Activated naive CD4-positive, alpha-beta T cell treated with anti-CD3 and anti-CD28 coated beads for 36 hours (primary cell): ENCODE measurements at regions of chr3 and their contacts with region 1.

Region 1: GRCh38 chr3:188584162-188584529 is 430.2 kb downstream of the LPP start:
- DNase-seq: peak; percentile 61
- H3K4me3 Mint-ChIP-seq: no peak overlapping the region
- H3K27ac Mint-ChIP-seq: no peak overlapping the region
- H3K4me1 Mint-ChIP-seq: peaks cover 15% of the 10 kb centered on the region
- H3K27me3 Mint-ChIP-seq: no peaks in the 10 kb centered on the region

Region 2: GRCh38 chr3:187770224-187770623 is 813.9 kb before region 1 on chr3:
- CTCF ChIA-PET with region 1: no interaction called
- intact Hi-C with region 1: loop called (anchors 1 kb)
- DNase-seq: peak; percentile 73
- H3K4me3 Mint-ChIP-seq: no peak overlapping the region
- H3K27ac Mint-ChIP-seq: peak overlapping the region; percentile 82
- H3K4me1 Mint-ChIP-seq: peaks cover 38% of the 10 kb centered on the region
- H3K27me3 Mint-ChIP-seq: no peaks in the 10 kb centered on the region

Region 3: DNA sequence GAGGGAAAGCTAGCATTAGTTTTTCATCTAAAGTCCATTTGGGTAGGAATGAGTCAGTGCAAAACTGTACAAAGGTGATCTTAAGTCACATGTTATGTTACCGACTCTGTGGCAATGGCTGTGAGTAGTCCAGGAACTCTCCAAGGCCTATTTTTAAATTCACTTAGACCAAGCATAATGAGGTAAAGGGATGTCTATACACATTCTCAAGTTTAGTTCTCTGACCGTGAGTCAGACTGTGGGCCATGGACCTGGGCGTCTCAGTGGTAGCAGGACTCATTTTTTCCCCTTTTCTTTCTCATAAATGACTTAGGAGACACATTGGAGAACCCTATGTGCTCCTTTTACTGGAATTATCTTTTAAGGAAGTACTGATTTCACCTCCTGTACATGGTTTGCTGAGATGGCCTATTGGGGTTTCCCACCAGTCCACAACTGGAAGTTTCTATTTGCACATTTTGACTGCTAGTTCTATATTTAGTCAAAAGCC is 98.9 kb after region 1 on chr3:
- CTCF ChIA-PET with region 1: no interaction called
- intact Hi-C with region 1: no loop called
- DNase-seq: peak; percentile 51
- H3K4me3 Mint-ChIP-seq: no peak overlapping the region
- H3K27ac Mint-ChIP-seq: peak overlapping the region; percentile 37
- H3K4me1 Mint-ChIP-seq: peaks cover 32% of the 10 kb centered on the region
- H3K27me3 Mint-ChIP-seq: no peaks in the 10 kb centered on the region

Region 4: GRCh38 chr3:188947401-188948280 is 363.5 kb after region 1 on chr3:
- CTCF ChIA-PET with region 1: no interaction called
- intact Hi-C with region 1: loop called (anchors 2 kb)
- DNase-seq: peak; percentile 61
- H3K4me3 Mint-ChIP-seq: no peak overlapping the region
- H3K27ac Mint-ChIP-seq: no peak overlapping the region
- H3K4me1 Mint-ChIP-seq: peaks cover 35% of the 10 kb centered on the region
- H3K27me3 Mint-ChIP-seq: peaks cover 18% of the 10 kb centered on the region

Region 5: DNA sequence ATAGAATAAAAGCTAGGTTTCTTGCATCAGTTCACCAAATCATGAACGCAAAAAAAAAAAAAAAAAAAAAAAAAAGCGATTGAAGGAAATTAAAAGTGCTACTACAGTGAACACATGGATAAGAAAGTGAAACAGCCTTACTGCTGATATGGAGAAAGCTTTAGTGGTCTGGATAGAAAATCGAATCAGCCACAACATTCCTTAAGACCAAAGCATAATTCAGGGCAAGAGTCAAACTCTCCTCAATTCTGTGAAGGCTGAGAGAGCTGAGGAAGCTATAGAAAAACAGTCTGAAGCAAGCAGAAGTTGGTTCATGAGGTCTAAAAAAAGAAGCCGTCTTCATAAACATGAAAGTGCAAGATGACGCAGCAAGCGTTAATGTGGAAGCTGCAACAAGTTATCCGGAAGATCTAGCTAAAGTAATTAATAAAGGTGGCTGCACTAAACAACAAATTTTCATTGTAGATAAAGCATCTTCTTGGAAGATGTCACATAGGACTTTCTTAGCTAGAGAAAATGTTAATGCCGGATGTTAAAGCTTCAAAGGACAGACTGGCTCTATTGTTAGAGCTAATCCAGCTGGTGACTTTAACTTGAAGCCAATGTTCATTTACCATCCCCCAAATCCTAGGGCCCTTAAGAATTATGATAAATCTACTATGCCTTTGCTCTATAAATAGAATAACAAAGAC is 1517.3 kb after region 1 on chr3:
- CTCF ChIA-PET with region 1: no interaction called
- intact Hi-C with region 1: no loop called
- DNase-seq: no peak
- H3K4me3 Mint-ChIP-seq: peak overlapping the region; percentile 34
- H3K27ac Mint-ChIP-seq: no peak overlapping the region
- H3K4me1 Mint-ChIP-seq: peaks cover 8% of the 10 kb centered on the region
- H3K27me3 Mint-ChIP-seq: peaks cover 19% of the 10 kb centered on the region